H1 (cell line): ENCODE measurements at regions of chr11 and their contacts with region 1.

Region 1: GRCh38 chr11:111723595-111723994 is 42.6 kb downstream of the PPP2R1B start:
- DNase-seq: no peak
- H3K4me3 ChIP-seq: no peak overlapping the region
- H3K27ac ChIP-seq: no peak overlapping the region
- H3K4me1 ChIP-seq: peaks cover 3 to 9% (median 5%) of the 10 kb centered on the region in 4 experiments; a peak in 5 of 7 replicates
- H3K27me3 ChIP-seq: no peaks in the 10 kb centered on the region
- CTCF ChIP-seq: no peak
- EP300 ChIP-seq: no peak
- POLR2A ChIP-seq: no peak
- RAD21 ChIP-seq: no peak

Region 2: GRCh38 chr11:111460856-111461255 is 262.7 kb before region 1 on chr11:
- CTCF ChIA-PET with region 1: no interaction called
- POLR2A ChIA-PET with region 1: no interaction called
- DNase-seq: no peak
- H3K4me3 ChIP-seq: no peak overlapping the region
- H3K27ac ChIP-seq: no peak overlapping the region
- H3K4me1 ChIP-seq: no peaks in the 10 kb centered on the region
- H3K27me3 ChIP-seq: no peaks in the 10 kb centered on the region; a peak in 1 of 7 replicates
- CTCF ChIP-seq: no peak
- EP300 ChIP-seq: no peak
- POLR2A ChIP-seq: no peak
- RAD21 ChIP-seq: no peak

Region 3: DNA sequence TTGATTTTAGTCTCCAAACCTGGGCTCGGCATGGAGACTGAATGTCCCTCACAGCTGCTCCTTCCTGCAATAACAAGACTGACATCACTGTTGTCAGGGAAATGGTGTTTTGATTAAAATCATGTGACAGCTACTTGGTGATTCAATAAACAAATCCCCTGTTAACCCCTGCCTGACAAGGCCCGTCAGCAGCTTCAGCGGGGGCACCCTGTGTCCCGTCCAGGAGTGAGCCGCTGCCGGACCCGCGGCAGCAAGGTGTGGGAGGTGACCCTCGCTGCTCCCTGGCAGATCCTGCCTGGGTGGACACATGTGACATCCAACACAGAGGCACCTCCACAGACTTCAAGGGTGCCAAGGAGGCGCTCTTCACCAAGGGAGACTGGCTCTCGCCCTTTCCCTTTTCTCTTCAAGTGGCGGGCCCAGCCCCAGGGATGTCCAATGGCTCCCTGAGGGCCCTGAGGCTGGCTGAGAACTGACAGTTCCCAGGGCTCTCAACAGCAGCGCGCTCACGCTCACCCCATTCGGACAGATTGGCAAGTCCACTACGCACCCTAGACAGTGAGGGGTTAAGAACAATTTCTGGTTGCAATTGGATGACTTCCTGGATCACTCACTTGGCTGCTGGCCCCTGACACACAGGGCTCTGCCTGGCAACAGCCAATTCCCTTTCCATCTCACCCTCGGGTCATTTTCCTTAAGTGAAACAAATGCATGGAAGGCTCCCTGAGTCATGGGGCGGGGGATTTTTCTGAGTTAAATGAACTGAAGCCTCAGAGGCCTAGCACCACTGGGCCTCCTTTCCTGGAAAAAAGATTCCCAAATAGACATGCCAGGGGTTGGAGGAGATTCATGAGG is 11.9 kb after region 1 on chr11:
- CTCF ChIA-PET with region 1: interaction called, 7 read pairs
- POLR2A ChIA-PET with region 1: interaction called, 12 read pairs
- DNase-seq: no peak
- H3K4me3 ChIP-seq: no peak overlapping the region
- H3K27ac ChIP-seq: no peak overlapping the region
- H3K4me1 ChIP-seq: peaks cover 0 to 18% (median 7%) of the 10 kb centered on the region in 4 experiments; a peak in 6 of 7 replicates
- H3K27me3 ChIP-seq: no peaks in the 10 kb centered on the region
- CTCF ChIP-seq: no peak
- EP300 ChIP-seq: no peak
- POLR2A ChIP-seq: no peak
- RAD21 ChIP-seq: no peak